CD8-positive, alpha-beta T cell (primary cell): ENCODE measurements at regions of chr15 and their contacts with region 1.

Region 1: GRCh38 chr15:44573386-44573785 is 36.4 kb downstream of the EIF3J start:
- DNase-seq: no peak
- ATAC-seq: no peak
- H3K4me3 ChIP-seq: no peak overlapping the region
- H3K4me3 Mint-ChIP-seq: no peak overlapping the region
- H3K27ac ChIP-seq: no peak overlapping the region
- H3K27ac Mint-ChIP-seq: no peak overlapping the region
- H3K4me1 ChIP-seq: no peaks in the 10 kb centered on the region
- H3K4me1 Mint-ChIP-seq: peaks cover 8% of the 10 kb centered on the region
- H3K27me3 ChIP-seq: no peaks in the 10 kb centered on the region
- H3K27me3 Mint-ChIP-seq: no peaks in the 10 kb centered on the region
- CTCF ChIP-seq: no peak

Region 2: DNA sequence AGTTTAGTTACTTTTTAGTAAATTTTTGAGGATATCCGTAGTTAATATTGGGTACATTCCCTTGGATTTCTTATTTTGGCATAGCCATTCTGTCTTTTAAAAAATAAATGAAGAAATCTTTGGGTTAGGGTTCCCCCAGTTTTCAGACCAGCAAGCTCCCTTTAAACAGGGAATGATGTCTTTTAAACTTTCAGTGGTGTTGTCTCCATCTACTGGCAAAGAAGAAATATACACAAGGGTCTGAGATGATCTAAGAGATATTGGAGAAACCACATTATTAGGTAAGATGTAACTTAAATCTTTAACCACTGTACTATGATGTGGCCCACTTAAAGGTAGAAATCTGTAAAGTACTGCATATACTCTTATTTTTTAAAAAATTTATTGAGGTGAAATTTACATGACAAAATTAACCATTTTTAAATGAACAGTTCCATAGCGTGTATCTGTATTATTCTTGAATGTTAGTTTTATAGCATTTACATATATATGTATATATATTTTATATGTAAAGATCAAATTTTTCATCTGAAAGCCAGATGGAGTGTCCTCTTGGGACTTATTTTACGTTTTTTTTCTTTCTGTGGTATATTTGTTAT is 71.5 kb before region 1 on chr15:
- CTCF ChIA-PET with region 1: no interaction called
- POLR2A ChIA-PET with region 1: no interaction called
- intact Hi-C with region 1: no loop called
- DNase-seq: peak in 2 of 9 experiments; percentile 42 to 62
- ATAC-seq: peak; percentile 73
- H3K4me3 ChIP-seq: no peak overlapping the region
- H3K4me3 Mint-ChIP-seq: no peak overlapping the region
- H3K27ac ChIP-seq: no peak overlapping the region
- H3K27ac Mint-ChIP-seq: no peak overlapping the region
- H3K4me1 ChIP-seq: no peaks in the 10 kb centered on the region
- H3K4me1 Mint-ChIP-seq: peaks cover 17% of the 10 kb centered on the region
- H3K27me3 ChIP-seq: no peaks in the 10 kb centered on the region
- H3K27me3 Mint-ChIP-seq: no peaks in the 10 kb centered on the region
- CTCF ChIP-seq: peak; percentile 72

Region 3: GRCh38 chr15:44530653-44531052 is 42.7 kb before region 1 on chr15:
- CTCF ChIA-PET with region 1: no interaction called
- POLR2A ChIA-PET with region 1: no interaction called
- intact Hi-C with region 1: no loop called
- DNase-seq: no peak
- ATAC-seq: no peak
- H3K4me3 ChIP-seq: no peak overlapping the region
- H3K4me3 Mint-ChIP-seq: no peak overlapping the region
- H3K27ac ChIP-seq: no peak overlapping the region
- H3K27ac Mint-ChIP-seq: peak overlapping the region; percentile 16
- H3K4me1 ChIP-seq: peaks cover 10% of the 10 kb centered on the region
- H3K4me1 Mint-ChIP-seq: peaks cover 26% of the 10 kb centered on the region
- H3K27me3 ChIP-seq: no peaks in the 10 kb centered on the region
- H3K27me3 Mint-ChIP-seq: no peaks in the 10 kb centered on the region
- CTCF ChIP-seq: no peak

Region 4: GRCh38 chr15:44738340-44738984 is 165.1 kb after region 1 on chr15:
- CTCF ChIA-PET with region 1: interaction called, 15 read pairs
- POLR2A ChIA-PET with region 1: interaction called, 3 read pairs
- intact Hi-C with region 1: no loop called
- DNase-seq: peak in 2 of 9 experiments; percentile 69 to 78
- ATAC-seq: no peak
- H3K4me3 ChIP-seq: no peak overlapping the region
- H3K4me3 Mint-ChIP-seq: peak overlapping the region; percentile 15
- H3K27ac ChIP-seq: peak overlapping the region in 1 of 2 experiments; percentile 91
- H3K27ac Mint-ChIP-seq: peak overlapping the region; percentile 78
- H3K4me1 ChIP-seq: peaks cover 50% of the 10 kb centered on the region
- H3K4me1 Mint-ChIP-seq: peaks cover 57% of the 10 kb centered on the region
- H3K27me3 ChIP-seq: no peaks in the 10 kb centered on the region
- H3K27me3 Mint-ChIP-seq: no peaks in the 10 kb centered on the region
- CTCF ChIP-seq: peak; percentile 78

Region 5: GRCh38 chr15:45037936-45038335 is 464.6 kb after region 1 on chr15:
- CTCF ChIA-PET with region 1: interaction called, 12 read pairs
- POLR2A ChIA-PET with region 1: no interaction called
- intact Hi-C with region 1: loop called (anchors 1 kb)
- DNase-seq: no peak
- ATAC-seq: no peak
- H3K4me3 ChIP-seq: no peak overlapping the region
- H3K4me3 Mint-ChIP-seq: no peak overlapping the region
- H3K27ac ChIP-seq: no peak overlapping the region
- H3K27ac Mint-ChIP-seq: no peak overlapping the region
- H3K4me1 ChIP-seq: peaks cover 4% of the 10 kb centered on the region
- H3K4me1 Mint-ChIP-seq: peaks cover 16% of the 10 kb centered on the region
- H3K27me3 ChIP-seq: no peaks in the 10 kb centered on the region
- H3K27me3 Mint-ChIP-seq: no peaks in the 10 kb centered on the region
- CTCF ChIP-seq: no peak